Astrocyte of the cerebellum (primary cell): ENCODE measurements at regions of chr2 and their contacts with region 1.

Region 1: DNA sequence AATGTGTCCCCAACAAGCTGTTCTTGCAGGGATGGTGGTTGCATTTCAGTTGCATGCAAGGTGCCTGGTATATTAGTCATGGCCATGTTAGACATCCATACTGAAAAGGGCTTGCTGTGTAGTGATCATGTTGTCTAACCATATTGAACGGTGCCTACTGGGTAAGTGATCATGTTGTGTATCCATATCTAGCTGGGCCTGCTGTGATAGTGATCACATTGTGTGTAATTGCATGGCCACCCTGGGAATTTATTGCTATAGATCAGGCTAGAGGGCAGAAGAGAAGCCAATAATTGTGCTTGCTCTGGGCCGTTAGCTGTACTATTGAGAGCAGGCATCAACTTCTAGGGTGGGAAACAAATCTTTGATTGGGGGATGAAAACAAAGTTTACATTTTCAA is 9.8 kb upstream of the EPC2 start:
- DNase-seq: no peak
- H3K4me3 ChIP-seq: no peak overlapping the region
- CTCF ChIP-seq: no peak

Region 2: GRCh38 chr2:148586522-148587128 is 48.1 kb before region 1 on chr2:
- in situ Hi-C with region 1: loop called (anchors 5 kb)
- DNase-seq: no peak
- H3K4me3 ChIP-seq: no peak overlapping the region
- CTCF ChIP-seq: no peak